Activated CD8-positive, alpha-beta T cell treated with anti-CD3 and anti-CD28 coated beads, Interleukin-2, amount 10 ng/mL, durations not matched to agents 7 days and 5 days (primary cell): ENCODE measurements at regions of chr6 and their contacts with region 1.

Region 1: GRCh38 chr6:41424370-41425058 is 89.1 kb downstream of the NCR2 start:
- DNase-seq: peak; percentile 86
- ATAC-seq: peak; percentile 66
- H3K4me3 Mint-ChIP-seq: no peak overlapping the region
- H3K27ac Mint-ChIP-seq: no peak overlapping the region
- H3K4me1 Mint-ChIP-seq: peaks cover 9% of the 10 kb centered on the region
- H3K27me3 Mint-ChIP-seq: peaks cover 45% of the 10 kb centered on the region

Region 2: GRCh38 chr6:41239467-41240159 is 184.9 kb before region 1 on chr6:
- CTCF ChIA-PET with region 1: no interaction called
- POLR2A ChIA-PET with region 1: no interaction called
- DNase-seq: no peak
- ATAC-seq: no peak
- H3K4me3 Mint-ChIP-seq: no peak overlapping the region
- H3K27ac Mint-ChIP-seq: no peak overlapping the region
- H3K4me1 Mint-ChIP-seq: no peaks in the 10 kb centered on the region
- H3K27me3 Mint-ChIP-seq: peaks cover 46% of the 10 kb centered on the region

Region 3: DNA sequence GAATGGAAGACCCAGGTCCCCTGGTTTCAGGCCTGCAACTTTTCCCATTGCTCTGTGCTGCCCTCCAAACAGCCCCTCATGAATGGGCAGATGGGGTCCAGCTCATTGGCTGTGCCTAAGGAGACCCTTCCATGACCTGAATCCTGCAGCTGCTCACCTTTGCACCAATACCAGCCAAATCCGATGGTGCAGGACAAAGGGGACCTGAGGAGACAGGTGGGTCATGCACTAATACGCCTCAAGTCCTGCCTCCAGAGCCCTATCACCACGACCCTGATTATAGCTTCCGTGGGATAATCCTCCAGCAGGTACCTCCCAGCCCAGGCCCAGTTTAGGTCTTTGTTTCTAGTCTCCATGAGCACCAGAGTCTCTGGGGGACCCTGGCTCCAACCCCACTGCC is 154.8 kb before region 1 on chr6:
- CTCF ChIA-PET with region 1: no interaction called
- POLR2A ChIA-PET with region 1: no interaction called
- DNase-seq: no peak
- ATAC-seq: no peak
- H3K4me3 Mint-ChIP-seq: no peak overlapping the region
- H3K27ac Mint-ChIP-seq: no peak overlapping the region
- H3K4me1 Mint-ChIP-seq: peaks cover 11% of the 10 kb centered on the region
- H3K27me3 Mint-ChIP-seq: peaks cover 11% of the 10 kb centered on the region

Region 4: GRCh38 chr6:41413250-41413649 is 11.3 kb before region 1 on chr6:
- CTCF ChIA-PET with region 1: interaction called, 12 read pairs
- POLR2A ChIA-PET with region 1: no interaction called
- DNase-seq: no peak
- ATAC-seq: no peak
- H3K4me3 Mint-ChIP-seq: no peak overlapping the region
- H3K27ac Mint-ChIP-seq: no peak overlapping the region
- H3K4me1 Mint-ChIP-seq: no peaks in the 10 kb centered on the region
- H3K27me3 Mint-ChIP-seq: peaks cover 58% of the 10 kb centered on the region

Region 5: DNA sequence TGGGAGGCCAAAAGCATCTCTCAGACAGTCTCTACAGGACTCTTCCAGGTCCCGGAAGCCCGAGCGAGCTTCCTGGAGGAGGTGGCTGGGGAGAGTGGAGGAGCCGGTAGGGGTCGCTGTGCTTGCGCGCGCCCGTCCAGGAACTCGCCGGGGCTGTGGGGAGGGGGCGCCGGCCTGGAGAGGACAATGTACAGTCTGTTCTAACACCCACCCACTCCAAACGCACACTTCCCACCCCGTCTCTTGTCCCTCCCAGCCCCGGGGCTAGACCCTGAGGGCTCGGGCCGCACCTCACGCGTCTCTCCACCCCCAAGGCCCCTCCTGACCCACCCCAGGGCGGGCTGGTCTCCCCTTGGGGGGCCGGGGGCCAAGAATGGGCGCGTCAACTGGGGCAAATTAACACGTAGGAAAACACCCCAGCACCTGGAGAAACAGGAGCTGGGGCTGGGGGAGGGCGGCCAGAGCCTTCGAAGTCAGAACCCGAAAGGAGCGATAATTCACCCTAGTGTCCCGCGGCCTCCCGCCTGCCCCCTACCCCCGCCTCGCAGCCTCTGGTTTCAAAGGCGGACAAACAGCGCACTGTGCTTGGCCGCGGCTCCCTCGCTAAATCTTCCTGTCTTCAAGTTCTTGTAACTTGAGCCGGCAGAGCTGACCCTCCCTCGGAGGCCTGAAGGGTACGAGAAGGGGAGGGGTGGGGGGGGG is 18.4 kb after region 1 on chr6:
- CTCF ChIA-PET with region 1: interaction called, 17 read pairs
- POLR2A ChIA-PET with region 1: no interaction called
- DNase-seq: no peak
- ATAC-seq: no peak
- H3K4me3 Mint-ChIP-seq: no peak overlapping the region
- H3K27ac Mint-ChIP-seq: no peak overlapping the region
- H3K4me1 Mint-ChIP-seq: peaks cover 41% of the 10 kb centered on the region
- H3K27me3 Mint-ChIP-seq: peaks cover 43% of the 10 kb centered on the region

Region 6: DNA sequence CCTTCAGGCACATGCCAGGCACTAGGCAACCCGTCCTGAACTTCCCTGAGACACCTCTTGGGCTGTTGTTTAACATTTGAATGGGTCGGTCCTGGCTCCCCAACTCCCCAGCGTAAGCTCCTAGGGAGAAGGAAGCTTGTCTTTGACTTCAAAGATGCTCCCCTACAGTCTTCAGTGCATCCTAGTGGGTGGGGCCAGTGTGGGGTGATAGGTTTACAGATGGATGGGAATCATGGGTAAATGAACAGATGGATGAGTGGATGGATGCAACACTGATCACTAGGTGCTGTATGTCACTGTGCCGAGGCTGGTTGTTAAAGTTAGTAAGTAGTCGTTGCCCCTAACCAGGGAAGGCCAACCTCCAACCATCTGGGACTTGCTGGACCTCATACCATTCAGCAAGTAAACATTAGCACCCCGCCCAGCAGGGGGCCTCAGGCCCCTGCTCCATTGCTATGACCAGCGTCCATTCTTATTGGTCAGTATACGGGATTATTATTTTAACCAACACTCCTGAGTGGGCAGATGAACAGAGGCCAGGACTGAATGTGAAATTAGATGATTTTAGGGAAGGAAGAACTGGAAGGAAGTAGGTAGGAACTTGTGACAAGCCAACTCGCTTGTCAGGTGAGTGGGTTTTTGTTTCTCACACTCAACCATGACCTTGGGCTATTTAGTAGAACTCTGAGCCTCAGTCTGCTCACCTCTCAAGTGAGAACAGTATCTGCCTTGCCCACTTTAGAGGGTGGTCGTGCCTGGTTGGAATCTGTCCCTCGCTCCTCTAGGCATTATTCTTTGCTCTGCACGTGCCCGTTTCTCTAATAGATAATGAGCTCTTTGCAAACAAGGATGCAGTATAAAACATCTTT is 38.8 kb after region 1 on chr6:
- CTCF ChIA-PET with region 1: interaction called, 14 read pairs
- POLR2A ChIA-PET with region 1: no interaction called
- DNase-seq: no peak
- ATAC-seq: no peak
- H3K4me3 Mint-ChIP-seq: no peak overlapping the region
- H3K27ac Mint-ChIP-seq: no peak overlapping the region
- H3K4me1 Mint-ChIP-seq: no peaks in the 10 kb centered on the region
- H3K27me3 Mint-ChIP-seq: peaks cover 57% of the 10 kb centered on the region

Region 7: GRCh38 chr6:41545703-41546474 is 121.4 kb after region 1 on chr6 and contains the start of gene FOXP4:
- CTCF ChIA-PET with region 1: interaction called, 13 read pairs
- POLR2A ChIA-PET with region 1: no interaction called
- DNase-seq: peak; percentile 92
- ATAC-seq: peak; percentile 87
- H3K4me3 Mint-ChIP-seq: peak within 1 kb of the TSS; percentile 81
- H3K27ac Mint-ChIP-seq: no peak within 1 kb of the TSS
- H3K4me1 Mint-ChIP-seq: peaks cover 30% of the 10 kb centered on the region
- H3K27me3 Mint-ChIP-seq: peaks cover 60% of the 10 kb centered on the region
- total RNA-seq, gene FOXP4: 6.7 to 7.1 TPM

Region 8: GRCh38 chr6:41568585-41569384 is 144.3 kb after region 1 on chr6:
- CTCF ChIA-PET with region 1: no interaction called
- POLR2A ChIA-PET with region 1: no interaction called
- DNase-seq: no peak
- ATAC-seq: no peak
- H3K4me3 Mint-ChIP-seq: no peak overlapping the region
- H3K27ac Mint-ChIP-seq: no peak overlapping the region
- H3K4me1 Mint-ChIP-seq: no peaks in the 10 kb centered on the region
- H3K27me3 Mint-ChIP-seq: peaks cover 7% of the 10 kb centered on the region

Region 9: DNA sequence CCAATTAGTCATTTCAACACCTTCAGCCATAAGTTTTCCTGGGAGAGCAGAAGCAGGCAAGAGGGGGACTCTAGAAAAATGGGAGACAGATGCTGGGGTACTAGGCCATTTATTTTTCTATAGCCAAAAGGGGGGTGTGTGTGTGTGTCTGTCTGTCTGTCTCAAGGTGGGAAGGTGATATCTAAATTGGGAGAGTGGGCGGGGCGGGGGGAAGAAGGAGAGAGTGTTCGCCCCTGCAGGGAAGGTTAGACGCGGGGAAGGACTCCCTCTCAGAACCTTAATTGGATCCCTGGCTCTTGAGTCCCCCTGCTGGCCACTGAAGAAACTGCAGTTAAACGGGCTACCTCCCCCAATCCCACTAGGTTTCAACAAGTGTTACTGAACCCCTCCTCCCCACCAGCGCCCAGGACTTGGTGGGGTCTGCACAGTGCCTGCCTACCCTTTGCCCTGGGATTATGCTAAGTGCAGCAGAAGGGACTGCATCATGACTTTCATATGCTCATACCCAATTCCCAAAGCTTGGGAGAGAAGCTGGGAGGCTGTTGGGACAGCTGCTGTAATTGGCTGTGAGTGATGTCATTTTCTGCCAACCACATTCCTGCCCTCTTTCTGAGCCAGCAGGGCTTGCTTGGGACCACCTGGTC is 167.5 kb after region 1 on chr6:
- CTCF ChIA-PET with region 1: interaction called, 51 read pairs
- POLR2A ChIA-PET with region 1: no interaction called
- DNase-seq: peak; percentile 85
- ATAC-seq: peak; percentile 77
- H3K4me3 Mint-ChIP-seq: no peak overlapping the region
- H3K27ac Mint-ChIP-seq: no peak overlapping the region
- H3K4me1 Mint-ChIP-seq: no peaks in the 10 kb centered on the region
- H3K27me3 Mint-ChIP-seq: no peaks in the 10 kb centered on the region

Region 10: GRCh38 chr6:41859356-41859755 is 434.8 kb after region 1 on chr6:
- CTCF ChIA-PET with region 1: no interaction called
- POLR2A ChIA-PET with region 1: no interaction called
- DNase-seq: no peak
- ATAC-seq: no peak
- H3K4me3 Mint-ChIP-seq: no peak overlapping the region
- H3K27ac Mint-ChIP-seq: no peak overlapping the region
- H3K4me1 Mint-ChIP-seq: no peaks in the 10 kb centered on the region
- H3K27me3 Mint-ChIP-seq: no peaks in the 10 kb centered on the region